IMR-90 (cell line): ENCODE measurements at regions of chr11 and their contacts with region 1.

Region 1: DNA sequence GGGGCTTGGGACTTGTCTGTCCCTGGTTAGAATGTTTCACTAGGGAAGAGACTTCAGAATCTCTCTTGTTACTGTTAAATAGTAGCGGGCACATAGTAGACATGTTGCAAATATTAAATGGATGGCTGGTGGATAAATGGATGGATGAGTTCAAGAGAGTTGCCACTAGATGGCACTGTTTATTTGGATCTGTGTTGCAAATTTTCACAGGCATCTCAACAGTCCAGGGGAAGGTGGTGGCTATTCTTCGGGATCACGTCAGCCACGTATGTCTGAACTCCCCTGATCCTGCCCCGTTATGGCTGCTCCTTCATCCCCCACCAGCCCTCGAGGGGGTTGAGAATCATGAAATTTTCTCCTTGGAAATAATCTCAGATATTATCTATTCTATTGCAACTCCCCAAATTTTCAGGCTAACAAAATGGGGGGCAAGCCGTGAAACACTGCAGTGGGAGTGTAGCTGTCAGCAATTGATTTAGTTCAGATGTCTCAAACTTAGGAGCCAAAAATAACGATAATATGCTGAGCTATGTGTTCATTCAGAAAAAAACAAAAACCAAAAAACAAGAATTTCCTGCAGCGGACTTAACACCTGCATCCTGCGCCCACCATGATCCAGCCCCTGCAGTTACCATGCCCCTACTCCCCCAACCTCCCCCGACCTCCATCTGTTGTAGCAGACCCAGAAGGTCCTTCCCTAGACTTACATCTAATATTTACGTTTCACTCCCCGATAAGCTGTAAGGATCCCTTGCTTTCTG is 29.1 kb upstream of the BIRC3 start:
- DNase-seq: peak; percentile 82
- ATAC-seq: peak; percentile 85
- H3K4me3 ChIP-seq: no peak overlapping the region
- H3K27ac ChIP-seq: no peak overlapping the region
- H3K4me1 ChIP-seq: peaks cover 5% of the 10 kb centered on the region
- H3K27me3 ChIP-seq: no peaks in the 10 kb centered on the region
- CTCF ChIP-seq: peak; percentile 81
- POLR2A ChIP-seq: no peak
- RAD21 ChIP-seq: peak; percentile 79

Region 2: GRCh38 chr11:102341844-102342318 is 53.7 kb after region 1 on chr11:
- CTCF ChIA-PET with region 1: interaction called, 3 read pairs
- POLR2A ChIA-PET with region 1: no interaction called
- dilution Hi-C with region 1: no loop called
- in situ Hi-C with region 1: no loop called
- intact Hi-C with region 1: loop called (anchors 1 kb)
- DNase-seq: peak; percentile 87
- ATAC-seq: peak; percentile 63
- H3K4me3 ChIP-seq: no peak overlapping the region
- H3K27ac ChIP-seq: no peak overlapping the region
- H3K4me1 ChIP-seq: no peaks in the 10 kb centered on the region; the same call in 1 of the 2 replicates
- H3K27me3 ChIP-seq: no peaks in the 10 kb centered on the region
- CTCF ChIP-seq: peak; percentile 85
- POLR2A ChIP-seq: no peak
- RAD21 ChIP-seq: peak; percentile 74

Region 3: DNA sequence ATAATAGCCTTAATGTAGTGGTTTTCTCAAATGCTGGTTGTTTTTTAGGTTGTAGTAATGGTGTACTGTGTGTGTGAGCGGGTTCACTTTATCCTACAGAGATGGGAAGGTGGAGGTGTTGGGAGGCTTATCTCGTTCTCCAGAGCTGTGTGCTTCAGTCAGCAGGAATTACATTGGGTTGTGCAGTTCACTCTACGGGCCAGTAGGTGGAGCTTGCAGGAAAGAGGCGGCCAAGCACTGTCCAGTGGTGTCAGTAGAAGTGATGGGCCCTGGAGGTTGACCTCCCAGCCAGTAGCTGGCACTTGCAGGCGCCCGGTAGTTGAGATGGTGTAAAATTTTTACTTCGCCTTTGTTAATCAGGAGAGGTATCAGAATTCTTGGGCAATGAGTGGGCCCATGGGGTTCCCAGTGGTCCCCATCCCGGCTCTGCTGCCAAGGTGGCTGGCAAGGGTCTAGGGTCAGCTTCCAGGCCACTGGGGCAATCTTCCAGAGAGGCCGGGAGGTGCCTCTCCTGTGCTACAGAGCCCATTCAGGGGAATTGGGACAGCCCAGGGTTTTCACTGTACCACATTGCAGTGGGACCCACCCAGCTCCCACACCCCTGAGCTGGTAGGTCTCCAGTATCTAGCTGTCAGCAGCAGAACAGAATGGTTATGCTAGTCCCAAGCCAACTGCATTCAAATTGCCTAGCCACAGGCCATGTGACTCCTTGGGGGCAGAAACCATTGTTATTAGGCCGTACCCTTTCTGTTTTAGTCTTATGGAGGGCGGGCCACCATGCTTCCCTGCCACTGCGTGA is 102.7 kb after region 1 on chr11:
- CTCF ChIA-PET with region 1: interaction called, 4 read pairs
- POLR2A ChIA-PET with region 1: no interaction called
- dilution Hi-C with region 1: no loop called
- in situ Hi-C with region 1: loop called (anchors 25 kb)
- intact Hi-C with region 1: no loop called
- DNase-seq: peak; percentile 63
- ATAC-seq: peak; percentile 97
- H3K4me3 ChIP-seq: no peak overlapping the region
- H3K27ac ChIP-seq: no peak overlapping the region
- H3K4me1 ChIP-seq: peaks cover under 1% of the 10 kb centered on the region; the same call in 1 of the 2 replicates
- H3K27me3 ChIP-seq: no peaks in the 10 kb centered on the region
- CTCF ChIP-seq: peak; percentile 77
- POLR2A ChIP-seq: no peak
- RAD21 ChIP-seq: peak; percentile 70

Region 4: GRCh38 chr11:102420547-102420946 is 132.4 kb after region 1 on chr11:
- CTCF ChIA-PET with region 1: no interaction called
- POLR2A ChIA-PET with region 1: no interaction called
- dilution Hi-C with region 1: no loop called
- in situ Hi-C with region 1: no loop called
- intact Hi-C with region 1: no loop called
- DNase-seq: no peak
- ATAC-seq: no peak
- H3K4me3 ChIP-seq: no peak overlapping the region
- H3K27ac ChIP-seq: no peak overlapping the region
- H3K4me1 ChIP-seq: no peaks in the 10 kb centered on the region
- H3K27me3 ChIP-seq: no peaks in the 10 kb centered on the region
- CTCF ChIP-seq: no peak
- POLR2A ChIP-seq: no peak
- RAD21 ChIP-seq: no peak

Region 5: GRCh38 chr11:102604877-102605276 is 316.7 kb after region 1 on chr11:
- CTCF ChIA-PET with region 1: no interaction called
- POLR2A ChIA-PET with region 1: no interaction called
- dilution Hi-C with region 1: no loop called
- in situ Hi-C with region 1: no loop called
- intact Hi-C with region 1: loop called (anchors 2 kb)
- DNase-seq: no peak
- ATAC-seq: no peak
- H3K4me3 ChIP-seq: no peak overlapping the region
- H3K27ac ChIP-seq: no peak overlapping the region
- H3K4me1 ChIP-seq: peaks cover 6% of the 10 kb centered on the region; the same call in 1 of the 2 replicates
- H3K27me3 ChIP-seq: no peaks in the 10 kb centered on the region
- CTCF ChIP-seq: no peak
- POLR2A ChIP-seq: no peak
- RAD21 ChIP-seq: no peak

Region 6: DNA sequence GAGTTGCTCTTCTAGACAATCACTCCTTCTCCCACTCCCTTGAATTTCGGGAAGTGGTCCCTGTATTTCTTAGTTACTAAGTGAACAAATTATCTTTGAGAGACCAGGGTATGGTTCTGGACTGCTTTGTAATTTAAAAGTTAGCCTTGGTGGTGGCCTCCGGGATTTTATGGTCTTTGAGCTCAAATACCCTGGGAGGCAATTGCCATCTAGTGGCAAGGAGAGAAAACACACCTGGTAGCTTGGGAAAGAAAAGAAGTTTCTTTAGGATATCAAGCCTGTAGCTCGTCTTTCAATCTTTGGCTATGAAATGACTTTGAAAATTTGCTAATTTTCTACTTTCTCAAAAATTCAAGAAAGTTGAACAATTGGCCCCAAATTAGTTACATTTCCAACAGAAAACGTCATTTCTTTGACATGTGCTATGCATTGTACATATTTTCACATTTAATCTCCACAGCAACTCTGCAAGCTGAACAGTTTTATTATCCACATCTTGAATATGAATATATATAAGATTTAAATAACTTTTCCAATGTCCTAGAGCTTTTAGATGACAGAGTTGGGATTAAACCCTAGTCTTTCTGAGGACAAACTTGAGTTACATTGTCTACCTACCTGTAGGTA is 378.3 kb after region 1 on chr11:
- CTCF ChIA-PET with region 1: interaction called, 4 read pairs
- POLR2A ChIA-PET with region 1: no interaction called
- dilution Hi-C with region 1: no loop called
- in situ Hi-C with region 1: no loop called
- intact Hi-C with region 1: loop called (anchors 1 kb)
- DNase-seq: peak; percentile 60
- ATAC-seq: peak; percentile 95
- H3K4me3 ChIP-seq: no peak overlapping the region
- H3K27ac ChIP-seq: no peak overlapping the region
- H3K4me1 ChIP-seq: no peaks in the 10 kb centered on the region
- H3K27me3 ChIP-seq: peaks cover 3% of the 10 kb centered on the region; the same call in 1 of the 2 replicates
- CTCF ChIP-seq: peak; percentile 92
- POLR2A ChIP-seq: 0 out of 2 replicates have a peak, but pooled peaks have one; percentile 27
- RAD21 ChIP-seq: peak; percentile 94